ENCODE measurements at regions of chr13 and their contacts with region 1.

Region 1: DNA sequence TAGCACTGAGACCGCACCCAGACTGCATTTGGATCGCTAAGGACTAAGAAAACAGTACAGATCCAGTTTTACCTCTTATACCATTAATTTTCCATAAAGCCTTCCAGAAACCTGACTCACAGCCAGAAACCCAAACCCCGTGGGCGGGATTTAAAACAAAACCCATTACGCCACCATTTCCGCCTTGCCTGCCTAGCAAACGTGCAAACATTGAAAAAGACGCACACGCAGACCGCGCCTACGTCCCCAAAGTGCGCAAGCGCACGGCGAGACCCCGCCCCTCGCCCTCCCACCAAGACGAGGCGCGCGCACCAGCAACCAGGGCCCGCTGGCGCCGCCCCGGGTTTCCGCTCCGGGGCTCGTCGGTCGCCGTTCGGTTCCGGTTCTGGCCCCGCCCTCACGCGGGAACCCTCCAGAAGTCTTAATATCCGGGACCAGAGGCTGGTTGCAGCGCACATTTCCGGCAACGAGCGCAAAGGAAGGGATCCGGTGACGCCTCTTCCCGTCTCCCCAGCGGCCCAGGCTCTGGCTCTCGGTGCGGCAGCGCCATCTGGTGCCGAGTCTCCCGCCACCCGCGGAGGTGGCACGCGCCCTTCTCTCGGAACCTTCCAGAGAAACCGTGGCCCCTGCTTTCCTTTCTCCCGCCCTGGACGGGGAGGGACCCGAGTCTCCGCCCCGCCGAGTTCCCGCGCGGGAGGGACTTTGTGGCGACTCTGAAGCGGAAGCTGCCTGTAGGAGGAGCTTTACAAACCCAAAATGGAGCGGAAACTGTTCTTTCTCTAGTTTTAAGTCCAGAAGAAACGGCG is 256.9 kb upstream of the STARD13 start:
- DNase-seq: peak; percentile 98 to 100 (median 99)
- ATAC-seq: peak; percentile 89
- H3K4me3 ChIP-seq: peak overlapping the region; percentile 85
- H3K4me3 Mint-ChIP-seq: peak overlapping the region; percentile 86 to 98 (median 95)
- H3K27ac ChIP-seq: peak overlapping the region; percentile 99
- H3K27ac Mint-ChIP-seq: peak overlapping the region; percentile 98 to 100 (median 100)
- H3K4me1 ChIP-seq: peaks cover 27 to 35% of the 10 kb centered on the region in 2 donors
- H3K4me1 Mint-ChIP-seq: peaks cover 24 to 64% (median 49%) of the 10 kb centered on the region in 7 donors
- H3K27me3 ChIP-seq: no peaks in the 10 kb centered on the region
- H3K27me3 Mint-ChIP-seq: no peaks in the 10 kb centered on the region

Region 2: DNA sequence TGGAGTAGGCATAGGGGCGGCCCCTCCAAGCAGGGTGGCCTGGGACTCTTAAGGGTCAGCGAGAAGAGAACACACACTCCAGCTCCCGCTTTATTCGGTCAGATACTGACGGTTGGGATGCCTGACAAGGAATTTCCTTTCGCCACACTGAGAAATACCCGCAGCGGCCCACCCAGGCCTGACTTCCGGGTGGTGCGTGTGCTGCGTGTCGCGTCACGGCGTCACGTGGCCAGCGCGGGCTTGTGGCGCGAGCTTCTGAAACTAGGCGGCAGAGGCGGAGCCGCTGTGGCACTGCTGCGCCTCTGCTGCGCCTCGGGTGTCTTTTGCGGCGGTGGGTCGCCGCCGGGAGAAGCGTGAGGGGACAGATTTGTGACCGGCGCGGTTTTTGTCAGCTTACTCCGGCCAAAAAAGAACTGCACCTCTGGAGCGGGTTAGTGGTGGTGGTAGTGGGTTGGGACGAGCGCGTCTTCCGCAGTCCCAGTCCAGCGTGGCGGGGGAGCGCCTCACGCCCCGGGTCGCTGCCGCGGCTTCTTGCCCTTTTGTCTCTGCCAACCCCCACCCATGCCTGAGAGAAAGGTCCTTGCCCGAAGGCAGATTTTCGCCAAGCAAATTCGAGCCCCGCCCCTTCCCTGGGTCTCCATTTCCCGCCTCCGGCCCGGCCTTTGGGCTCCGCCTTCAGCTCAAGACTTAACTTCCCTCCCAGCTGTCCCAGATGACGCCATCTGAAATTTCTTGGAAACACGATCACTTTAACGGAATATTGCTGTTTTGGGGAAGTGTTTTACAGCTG is 1227.1 kb before region 1 on chr13 and contains the starts of genes BRCA2 and ZAR1L:
- CTCF ChIA-PET with region 1: no interaction called
- POLR2A ChIA-PET with region 1: interaction called, 8 read pairs
- intact Hi-C with region 1: loop called (anchors 1 kb)
- DNase-seq: peak; percentile 79 to 90 (median 86)
- ATAC-seq: peak; percentile 94
- H3K4me3 ChIP-seq: peak within 1 kb of the TSS; percentile 94
- H3K4me3 Mint-ChIP-seq: peak within 1 kb of the TSS; percentile 92 to 98 (median 96)
- H3K27ac ChIP-seq: peak within 1 kb of the TSS; percentile 99
- H3K27ac Mint-ChIP-seq: peak within 1 kb of the TSS; percentile 98 to 100 (median 100)
- H3K4me1 ChIP-seq: peaks cover 7 to 8% of the 10 kb centered on the region in 2 donors
- H3K4me1 Mint-ChIP-seq: peaks cover 5 to 43% (median 9%) of the 10 kb centered on the region in 7 donors
- H3K27me3 ChIP-seq: no peaks in the 10 kb centered on the region
- H3K27me3 Mint-ChIP-seq: no peaks in the 10 kb centered on the region
- total RNA-seq, gene BRCA2: 3.2 to 19.9 (median 4.3) TPM
- total RNA-seq, gene ZAR1L: not detected

Region 3: DNA sequence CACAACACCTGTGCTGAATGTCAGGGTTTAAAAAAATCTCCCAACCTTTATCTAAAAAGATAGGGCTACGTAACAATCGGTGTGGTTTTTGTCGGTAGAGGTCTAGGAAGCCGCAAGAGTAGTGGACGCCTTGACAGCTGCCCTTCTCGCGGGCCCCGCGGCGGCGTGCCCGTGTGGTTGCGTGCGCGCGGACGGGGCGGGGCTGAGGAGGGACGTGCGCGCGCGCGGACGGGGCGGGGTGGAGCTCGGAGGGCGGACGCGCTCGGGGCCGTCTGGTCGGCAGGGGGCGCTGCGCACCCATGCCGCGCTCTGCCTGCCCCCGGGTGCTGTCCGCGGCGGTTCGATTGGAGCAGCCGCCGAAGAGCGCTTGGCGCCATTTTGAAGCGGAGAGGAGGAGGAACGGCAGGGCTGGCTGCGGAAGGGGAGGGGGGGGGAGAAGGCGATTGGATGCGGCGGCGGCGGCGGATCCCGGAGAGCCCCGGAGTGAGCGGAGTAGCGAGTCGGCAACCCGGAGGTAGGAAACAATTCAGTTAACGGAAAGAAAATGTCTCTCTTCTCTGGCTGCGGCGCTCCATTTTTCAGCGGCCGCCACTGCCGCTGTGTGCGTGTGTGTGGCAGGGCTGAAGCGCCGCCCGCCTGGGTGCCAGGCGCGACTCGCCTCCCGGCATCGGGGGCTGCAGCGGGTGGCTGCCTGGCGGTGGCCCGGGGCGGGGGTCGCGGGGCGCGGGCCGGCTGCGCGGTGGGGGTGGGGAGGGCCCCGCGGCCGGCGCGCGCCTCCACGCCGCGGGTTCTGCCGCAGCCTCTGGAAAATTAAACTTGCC is 956.2 kb before region 1 on chr13 and contains the start of gene PDS5B:
- CTCF ChIA-PET with region 1: interaction called, 6 read pairs
- POLR2A ChIA-PET with region 1: interaction called, 8 read pairs
- intact Hi-C with region 1: loop called (anchors 1 kb)
- DNase-seq: peak; percentile 95 to 99 (median 97)
- ATAC-seq: peak; percentile 97
- H3K4me3 ChIP-seq: peak within 1 kb of the TSS; percentile 89
- H3K4me3 Mint-ChIP-seq: peak within 1 kb of the TSS; percentile 90 to 99 (median 97)
- H3K27ac ChIP-seq: peak within 1 kb of the TSS; percentile 79
- H3K27ac Mint-ChIP-seq: peak within 1 kb of the TSS; percentile 95 to 98 (median 96)
- H3K4me1 ChIP-seq: peaks cover 13 to 15% of the 10 kb centered on the region in 2 donors
- H3K4me1 Mint-ChIP-seq: peaks cover 32 to 49% (median 43%) of the 10 kb centered on the region in 7 donors
- H3K27me3 ChIP-seq: no peaks in the 10 kb centered on the region
- H3K27me3 Mint-ChIP-seq: peaks cover 0 to 20% (median 0%) of the 10 kb centered on the region in 5 donors
- total RNA-seq, gene PDS5B: 43.3 to 68.0 (median 52.1) TPM

Region 4: DNA sequence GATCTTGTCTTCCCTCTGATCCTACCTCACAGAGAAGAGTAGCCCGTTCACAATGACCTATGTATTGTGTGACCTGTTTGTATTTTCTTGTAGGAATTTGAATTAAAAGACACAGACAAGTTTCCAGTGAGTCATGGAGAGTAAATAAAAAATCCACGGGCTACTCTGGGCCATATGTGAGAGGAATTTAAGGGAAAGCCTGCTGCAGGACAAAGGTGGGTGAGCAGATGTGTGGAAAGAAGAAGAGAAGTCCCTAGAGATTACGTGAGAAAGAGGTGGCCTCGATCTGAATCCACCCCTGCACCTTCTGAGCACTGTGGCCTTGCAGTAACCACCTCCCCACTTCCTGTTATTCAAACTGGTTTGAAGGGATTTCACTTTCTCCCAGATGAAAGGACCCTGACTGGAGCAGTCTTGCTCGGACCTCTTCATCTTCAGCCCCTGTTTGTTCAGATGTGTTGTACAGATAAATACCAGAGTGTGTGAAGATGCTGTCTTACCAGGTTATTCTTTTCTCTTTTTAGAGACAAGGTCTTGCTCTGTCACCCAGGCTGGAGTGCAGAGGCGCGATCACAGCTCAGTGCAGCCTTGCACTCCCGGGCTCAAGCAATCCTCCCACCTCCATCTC is 750.8 kb before region 1 on chr13:
- CTCF ChIA-PET with region 1: no interaction called
- POLR2A ChIA-PET with region 1: no interaction called
- intact Hi-C with region 1: loop called (anchors 5 kb)
- DNase-seq: peak in 7 of 9 donors; percentile 35 to 61 (median 47)
- ATAC-seq: peak; percentile 82
- H3K4me3 ChIP-seq: no peak overlapping the region
- H3K4me3 Mint-ChIP-seq: peak overlapping the region; percentile 14 to 75 (median 59)
- H3K27ac ChIP-seq: peak overlapping the region; percentile 55
- H3K27ac Mint-ChIP-seq: peak overlapping the region; percentile 77 to 96 (median 90)
- H3K4me1 ChIP-seq: peaks cover 0 to 28% of the 10 kb centered on the region in 2 donors
- H3K4me1 Mint-ChIP-seq: peaks cover 25 to 64% (median 50%) of the 10 kb centered on the region in 7 donors
- H3K27me3 ChIP-seq: no peaks in the 10 kb centered on the region
- H3K27me3 Mint-ChIP-seq: no peaks in the 10 kb centered on the region

Region 5: GRCh38 chr13:33204130-33204927 is 338.2 kb before region 1 on chr13:
- CTCF ChIA-PET with region 1: no interaction called
- POLR2A ChIA-PET with region 1: no interaction called
- intact Hi-C with region 1: loop called in 1 of 2 experiments (anchors 5 kb)
- DNase-seq: no peak
- ATAC-seq: no peak
- H3K4me3 ChIP-seq: no peak overlapping the region
- H3K4me3 Mint-ChIP-seq: peak overlapping the region in 2 of 10 donors; percentile 11 to 73
- H3K27ac ChIP-seq: no peak overlapping the region
- H3K27ac Mint-ChIP-seq: peak overlapping the region in 1 of 9 donors; percentile 75
- H3K4me1 ChIP-seq: no peaks in the 10 kb centered on the region
- H3K4me1 Mint-ChIP-seq: peaks cover 8 to 59% (median 16%) of the 10 kb centered on the region in 7 donors
- H3K27me3 ChIP-seq: no peaks in the 10 kb centered on the region
- H3K27me3 Mint-ChIP-seq: peaks cover 0 to 31% (median 26%) of the 10 kb centered on the region in 5 donors

Region 6: DNA sequence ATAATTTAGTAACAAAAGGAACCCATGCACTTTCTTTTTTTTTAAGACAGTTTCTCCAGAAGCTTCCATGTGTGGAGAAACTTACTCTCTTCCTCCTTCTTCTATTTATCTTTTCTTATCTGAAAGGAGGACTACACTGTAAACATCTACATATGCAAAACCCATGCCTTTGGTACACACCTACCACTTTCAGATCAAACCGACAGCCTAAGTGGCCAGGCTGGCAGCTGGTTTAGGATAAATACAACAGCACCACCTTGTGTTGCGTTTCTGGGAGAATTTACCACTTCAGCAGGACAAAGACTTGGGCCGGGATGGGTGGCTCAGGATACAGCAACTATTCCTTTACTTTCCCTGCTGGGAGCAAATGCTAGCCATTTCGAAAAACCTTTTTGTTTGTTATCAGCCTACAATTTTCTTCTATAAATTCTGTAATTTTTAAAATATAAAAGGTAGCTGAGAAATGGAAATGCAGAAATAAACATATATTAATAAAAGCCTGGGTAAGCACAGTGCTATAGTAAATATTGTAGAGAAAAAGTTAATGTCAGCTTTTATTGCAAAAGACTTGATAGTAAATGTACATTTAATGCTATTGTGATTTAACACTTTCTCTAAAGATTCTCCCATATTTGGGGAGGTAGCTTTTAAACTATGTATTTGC is 181.4 kb after region 1 on chr13:
- CTCF ChIA-PET with region 1: no interaction called
- POLR2A ChIA-PET with region 1: interaction called, 3 read pairs
- intact Hi-C with region 1: loop called (anchors 1 kb)
- DNase-seq: peak in 8 of 9 donors; percentile 37 to 68 (median 58)
- ATAC-seq: peak; percentile 93
- H3K4me3 ChIP-seq: no peak overlapping the region
- H3K4me3 Mint-ChIP-seq: peak overlapping the region in 5 of 10 donors; percentile 5 to 65 (median 26)
- H3K27ac ChIP-seq: no peak overlapping the region
- H3K27ac Mint-ChIP-seq: peak overlapping the region in 4 of 9 donors; percentile 6 to 84 (median 27)
- H3K4me1 ChIP-seq: peaks cover 0 to 14% of the 10 kb centered on the region in 2 donors
- H3K4me1 Mint-ChIP-seq: peaks cover 2 to 33% (median 20%) of the 10 kb centered on the region in 7 donors
- H3K27me3 ChIP-seq: no peaks in the 10 kb centered on the region
- H3K27me3 Mint-ChIP-seq: no peaks in the 10 kb centered on the region

Region 7: DNA sequence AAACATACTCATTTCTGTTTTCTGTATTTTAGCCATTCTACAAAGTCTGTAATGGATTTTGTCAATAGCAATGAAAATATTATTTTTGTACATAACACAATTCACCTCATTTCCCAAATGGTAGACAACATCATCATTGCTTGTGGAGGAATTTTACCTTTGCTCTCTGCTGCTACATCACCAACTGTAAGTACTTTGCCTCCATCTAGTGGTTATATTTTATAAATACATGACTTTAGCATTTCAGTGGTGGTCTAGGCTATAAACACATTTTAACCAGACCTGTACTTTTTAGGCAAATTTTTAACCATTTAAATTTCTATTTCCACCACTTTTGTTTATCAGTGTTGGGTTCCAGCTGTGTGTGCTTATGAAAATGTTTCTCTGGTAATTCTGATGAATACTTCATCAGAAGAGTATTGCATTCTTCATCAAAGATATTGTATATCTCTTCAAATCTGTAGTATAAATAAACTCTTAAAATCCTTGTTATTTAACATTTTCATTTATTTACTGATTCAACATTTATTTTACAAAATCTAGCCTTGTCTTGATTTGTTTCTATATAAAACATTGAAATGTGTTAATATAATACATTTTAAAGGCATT is 1621.9 kb after region 1 on chr13:
- CTCF ChIA-PET with region 1: no interaction called
- POLR2A ChIA-PET with region 1: no interaction called
- intact Hi-C with region 1: loop called in 1 of 2 experiments (anchors 10 kb)
- DNase-seq: peak in 6 of 9 donors; percentile 13 to 50 (median 35)
- ATAC-seq: peak; percentile 64
- H3K4me3 ChIP-seq: no peak overlapping the region
- H3K4me3 Mint-ChIP-seq: no peak overlapping the region
- H3K27ac ChIP-seq: no peak overlapping the region
- H3K27ac Mint-ChIP-seq: no peak overlapping the region
- H3K4me1 ChIP-seq: no peaks in the 10 kb centered on the region
- H3K4me1 Mint-ChIP-seq: peaks cover 5 to 13% (median 9%) of the 10 kb centered on the region in 7 donors
- H3K27me3 ChIP-seq: no peaks in the 10 kb centered on the region
- H3K27me3 Mint-ChIP-seq: no peaks in the 10 kb centered on the region